B cell (primary cell): ENCODE measurements at regions of chr14 and their contacts with region 1.

Region 1: DNA sequence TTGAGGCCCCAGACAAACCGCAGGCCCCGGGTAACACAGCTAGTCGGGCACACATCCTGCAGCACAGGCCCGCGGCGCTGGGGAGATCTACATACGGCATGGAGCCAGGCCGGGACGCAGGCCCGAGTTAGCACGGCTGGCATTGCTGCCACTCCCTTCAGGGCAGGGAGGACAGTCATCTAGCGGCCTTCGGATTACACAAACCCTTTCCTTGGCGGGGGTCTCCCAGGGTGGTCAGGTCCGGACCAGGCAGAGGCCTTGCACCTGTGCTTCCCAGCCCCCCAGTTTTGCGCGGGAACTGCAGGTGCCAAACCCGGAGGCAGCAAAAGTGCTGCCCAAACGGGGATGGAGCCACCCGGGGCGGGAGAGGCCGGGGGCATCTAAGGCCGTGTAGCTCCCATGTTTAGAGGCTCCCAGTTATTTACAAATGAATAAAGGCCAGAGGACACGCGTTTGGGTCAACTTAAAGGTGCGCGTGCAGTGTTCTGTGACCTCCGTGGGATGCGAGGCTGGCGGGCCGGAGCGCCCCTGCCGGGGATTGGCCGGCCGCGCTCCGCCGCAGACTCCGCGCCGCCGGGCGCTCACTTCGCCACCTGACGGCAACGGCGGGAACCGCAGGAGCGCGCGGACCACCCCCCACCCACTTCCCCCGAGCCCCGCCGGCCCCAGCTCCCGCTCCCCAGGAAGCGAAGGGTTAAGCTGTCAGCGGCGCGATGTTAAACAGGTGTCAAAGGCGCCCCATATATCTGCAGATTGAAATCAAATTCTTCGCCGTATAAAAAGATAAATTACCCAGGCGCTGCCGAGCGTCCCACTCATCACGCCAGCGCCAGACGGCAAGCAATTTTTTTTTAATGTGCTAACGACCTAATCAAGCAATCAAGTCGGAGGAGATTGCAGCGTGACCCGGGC is 18.1 kb downstream of the VSX2 start:
- DNase-seq: peak; percentile 80
- ATAC-seq: peak; percentile 97
- H3K4me3 ChIP-seq: peak overlapping the region; percentile 38 to 72 (median 61)
- H3K4me3 Mint-ChIP-seq: peak overlapping the region; percentile 83
- H3K27ac ChIP-seq: no peak overlapping the region
- H3K27ac Mint-ChIP-seq: no peak overlapping the region
- H3K4me1 ChIP-seq: peaks cover 17% of the 10 kb centered on the region in 2 donors
- H3K4me1 Mint-ChIP-seq: peaks cover 6% of the 10 kb centered on the region
- H3K27me3 ChIP-seq: peaks cover 0 to 23% (median 8%) of the 10 kb centered on the region in 4 experiments
- H3K27me3 Mint-ChIP-seq: peaks cover 13% of the 10 kb centered on the region
- CTCF ChIP-seq: peak; percentile 100

Region 2: GRCh38 chr14:74084277-74085046 is 172.9 kb before region 1 on chr14 and contains the starts of genes ALDH6A1 and LIN52:
- CTCF ChIA-PET with region 1: no interaction called
- POLR2A ChIA-PET with region 1: no interaction called
- intact Hi-C with region 1: no loop called
- DNase-seq: peak; percentile 100
- ATAC-seq: peak; percentile 85
- H3K4me3 ChIP-seq: peak within 1 kb of the TSS; percentile 75 to 79 (median 77)
- H3K4me3 Mint-ChIP-seq: peak within 1 kb of the TSS; percentile 95
- H3K27ac ChIP-seq: peak within 1 kb of the TSS; percentile 34 to 79
- H3K27ac Mint-ChIP-seq: peak within 1 kb of the TSS; percentile 88
- H3K4me1 ChIP-seq: peaks cover 23 to 24% of the 10 kb centered on the region in 2 donors
- H3K4me1 Mint-ChIP-seq: peaks cover 35% of the 10 kb centered on the region
- H3K27me3 ChIP-seq: no peaks in the 10 kb centered on the region
- H3K27me3 Mint-ChIP-seq: no peaks in the 10 kb centered on the region
- CTCF ChIP-seq: no peak
- total RNA-seq, gene ALDH6A1: 14.9 and 16.7 TPM in 2 replicates
- total RNA-seq, gene LIN52: 13.1 and 15.5 TPM in 2 replicates

Region 3: GRCh38 chr14:74109369-74109768 is 148.0 kb before region 1 on chr14:
- CTCF ChIA-PET with region 1: interaction called, 16 read pairs
- POLR2A ChIA-PET with region 1: no interaction called
- intact Hi-C with region 1: loop called (anchors 1 kb)
- DNase-seq: no peak
- ATAC-seq: no peak
- H3K4me3 ChIP-seq: no peak overlapping the region
- H3K4me3 Mint-ChIP-seq: no peak overlapping the region
- H3K27ac ChIP-seq: no peak overlapping the region
- H3K27ac Mint-ChIP-seq: no peak overlapping the region
- H3K4me1 ChIP-seq: no peaks in the 10 kb centered on the region
- H3K4me1 Mint-ChIP-seq: no peaks in the 10 kb centered on the region
- H3K27me3 ChIP-seq: no peaks in the 10 kb centered on the region
- H3K27me3 Mint-ChIP-seq: no peaks in the 10 kb centered on the region
- CTCF ChIP-seq: no peak

Region 4: DNA sequence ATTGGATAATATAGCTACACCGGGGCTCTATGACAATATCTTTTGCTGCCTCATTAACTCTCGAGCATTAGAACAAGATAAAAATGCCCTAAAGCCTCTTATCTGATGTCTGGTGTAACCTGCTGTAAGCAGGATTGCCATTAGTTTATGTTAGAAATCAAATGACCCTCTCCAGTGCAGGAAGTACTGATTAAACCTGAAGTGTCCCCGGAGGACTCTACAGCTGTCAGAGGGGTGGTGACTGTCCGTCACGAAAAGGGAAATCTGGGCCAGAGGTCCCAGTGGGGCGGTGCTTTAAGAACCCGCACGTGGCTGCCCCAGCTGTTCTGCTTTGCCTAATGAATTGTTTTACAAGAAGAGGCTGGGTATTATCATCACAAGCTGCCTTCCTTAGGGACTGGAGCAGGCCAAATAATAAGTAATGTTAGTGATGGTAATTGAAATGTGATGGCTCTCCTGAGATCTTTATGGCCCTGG is 116.9 kb before region 1 on chr14:
- CTCF ChIA-PET with region 1: no interaction called
- POLR2A ChIA-PET with region 1: no interaction called
- intact Hi-C with region 1: no loop called
- DNase-seq: peak; percentile 25
- ATAC-seq: peak; percentile 81
- H3K4me3 ChIP-seq: no peak overlapping the region
- H3K4me3 Mint-ChIP-seq: no peak overlapping the region
- H3K27ac ChIP-seq: no peak overlapping the region
- H3K27ac Mint-ChIP-seq: no peak overlapping the region
- H3K4me1 ChIP-seq: peaks cover 7% of the 10 kb centered on the region in 2 donors
- H3K4me1 Mint-ChIP-seq: peaks cover 8% of the 10 kb centered on the region
- H3K27me3 ChIP-seq: no peaks in the 10 kb centered on the region
- H3K27me3 Mint-ChIP-seq: no peaks in the 10 kb centered on the region
- CTCF ChIP-seq: no peak

Region 5: GRCh38 chr14:74267588-74267987 is 10.3 kb after region 1 on chr14:
- CTCF ChIA-PET with region 1: interaction called, 12 read pairs
- POLR2A ChIA-PET with region 1: interaction called, 7 read pairs
- intact Hi-C with region 1: no loop called
- DNase-seq: no peak
- ATAC-seq: no peak
- H3K4me3 ChIP-seq: no peak overlapping the region
- H3K4me3 Mint-ChIP-seq: no peak overlapping the region
- H3K27ac ChIP-seq: no peak overlapping the region
- H3K27ac Mint-ChIP-seq: no peak overlapping the region
- H3K4me1 ChIP-seq: no peaks in the 10 kb centered on the region
- H3K4me1 Mint-ChIP-seq: no peaks in the 10 kb centered on the region
- H3K27me3 ChIP-seq: peaks cover 0 to 2% (median 0%) of the 10 kb centered on the region in 4 experiments
- H3K27me3 Mint-ChIP-seq: peaks cover 23% of the 10 kb centered on the region
- CTCF ChIP-seq: no peak

Region 6: GRCh38 chr14:74302634-74303577 is 45.6 kb after region 1 on chr14 and contains the start of gene ABCD4:
- CTCF ChIA-PET with region 1: no interaction called
- POLR2A ChIA-PET with region 1: no interaction called
- intact Hi-C with region 1: loop called (anchors 5 kb)
- DNase-seq: peak; percentile 90
- ATAC-seq: peak; percentile 98
- H3K4me3 ChIP-seq: peak within 1 kb of the TSS; percentile 69 to 96 (median 86)
- H3K4me3 Mint-ChIP-seq: peak within 1 kb of the TSS; percentile 95
- H3K27ac ChIP-seq: peak within 1 kb of the TSS; percentile 69 to 81
- H3K27ac Mint-ChIP-seq: peak within 1 kb of the TSS; percentile 88
- H3K4me1 ChIP-seq: peaks cover 11 to 14% of the 10 kb centered on the region in 2 donors
- H3K4me1 Mint-ChIP-seq: peaks cover 23% of the 10 kb centered on the region
- H3K27me3 ChIP-seq: no peaks in the 10 kb centered on the region
- H3K27me3 Mint-ChIP-seq: no peaks in the 10 kb centered on the region
- CTCF ChIP-seq: peak; percentile 59
- total RNA-seq, gene ABCD4: 119 and 125 TPM in 2 replicates

Region 7: DNA sequence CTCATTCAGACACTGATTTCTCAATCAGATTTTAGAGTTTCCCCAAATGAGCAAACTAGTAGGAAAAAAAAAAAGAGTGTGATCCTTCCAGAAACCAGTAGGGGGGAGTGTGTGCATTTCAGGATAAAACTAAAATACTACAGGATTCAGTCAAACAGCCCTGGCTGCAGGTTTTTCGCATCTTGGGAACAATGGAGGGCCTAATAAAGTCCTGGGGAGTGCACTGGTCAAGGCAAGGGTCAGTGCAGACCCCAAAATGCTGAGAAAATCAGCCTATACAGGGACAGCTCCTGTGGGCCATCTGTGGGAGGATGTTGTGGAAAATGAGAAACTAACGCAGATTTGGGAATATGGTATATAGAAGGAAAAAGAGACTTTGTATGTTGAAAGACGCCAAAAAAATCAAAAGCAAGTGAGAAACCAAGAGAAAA is 67.6 kb after region 1 on chr14:
- CTCF ChIA-PET with region 1: no interaction called
- POLR2A ChIA-PET with region 1: no interaction called
- intact Hi-C with region 1: no loop called
- DNase-seq: no peak
- ATAC-seq: no peak
- H3K4me3 ChIP-seq: no peak overlapping the region
- H3K4me3 Mint-ChIP-seq: no peak overlapping the region
- H3K27ac ChIP-seq: no peak overlapping the region
- H3K27ac Mint-ChIP-seq: no peak overlapping the region
- H3K4me1 ChIP-seq: no peaks in the 10 kb centered on the region
- H3K4me1 Mint-ChIP-seq: no peaks in the 10 kb centered on the region
- H3K27me3 ChIP-seq: peaks cover 0 to 2% (median 0%) of the 10 kb centered on the region in 4 experiments
- H3K27me3 Mint-ChIP-seq: peaks cover 20% of the 10 kb centered on the region
- CTCF ChIP-seq: peak; percentile 71